ENCODE measurements at regions of chr2 and their contacts with region 1.

Region 1: GRCh38 chr2:54522624-54523281 is 66.6 kb downstream of the SPTBN1 start:
- DNase-seq: peak; percentile 35
- ATAC-seq: peak; percentile 94
- H3K4me3 Mint-ChIP-seq: no peak overlapping the region
- H3K27ac Mint-ChIP-seq: no peak overlapping the region
- H3K4me1 Mint-ChIP-seq: peaks cover 15% of the 10 kb centered on the region
- H3K27me3 Mint-ChIP-seq: no peaks in the 10 kb centered on the region
- CTCF ChIP-seq: peak; percentile 81

Region 2: GRCh38 chr2:54606393-54606969 is 83.7 kb after region 1 on chr2:
- CTCF ChIA-PET with region 1: interaction called, 5 read pairs
- POLR2A ChIA-PET with region 1: no interaction called
- intact Hi-C with region 1: loop called (anchors 2 kb)
- DNase-seq: no peak
- ATAC-seq: no peak
- H3K4me3 Mint-ChIP-seq: no peak overlapping the region
- H3K27ac Mint-ChIP-seq: no peak overlapping the region
- H3K4me1 Mint-ChIP-seq: peaks cover 80% of the 10 kb centered on the region
- H3K27me3 Mint-ChIP-seq: no peaks in the 10 kb centered on the region
- CTCF ChIP-seq: no peak

Region 3: GRCh38 chr2:54657664-54658083 is 134.9 kb after region 1 on chr2:
- CTCF ChIA-PET with region 1: interaction called, 26 read pairs
- POLR2A ChIA-PET with region 1: no interaction called
- intact Hi-C with region 1: loop called (anchors 1 kb)
- DNase-seq: no peak
- ATAC-seq: peak; percentile 73
- H3K4me3 Mint-ChIP-seq: no peak overlapping the region
- H3K27ac Mint-ChIP-seq: peak overlapping the region; percentile 46
- H3K4me1 Mint-ChIP-seq: no peaks in the 10 kb centered on the region
- H3K27me3 Mint-ChIP-seq: no peaks in the 10 kb centered on the region
- CTCF ChIP-seq: no peak

Region 4: GRCh38 chr2:54838585-54839035 is 315.9 kb after region 1 on chr2:
- CTCF ChIA-PET with region 1: interaction called, 5 read pairs
- POLR2A ChIA-PET with region 1: interaction called, 3 read pairs
- intact Hi-C with region 1: loop called (anchors 1 kb)
- DNase-seq: peak; percentile 27
- ATAC-seq: peak; percentile 91
- H3K4me3 Mint-ChIP-seq: no peak overlapping the region
- H3K27ac Mint-ChIP-seq: no peak overlapping the region
- H3K4me1 Mint-ChIP-seq: peaks cover 4% of the 10 kb centered on the region
- H3K27me3 Mint-ChIP-seq: no peaks in the 10 kb centered on the region
- CTCF ChIP-seq: peak; percentile 58